ENCODE measurements at regions of chr17 and their contacts with region 1.

Region 1: DNA sequence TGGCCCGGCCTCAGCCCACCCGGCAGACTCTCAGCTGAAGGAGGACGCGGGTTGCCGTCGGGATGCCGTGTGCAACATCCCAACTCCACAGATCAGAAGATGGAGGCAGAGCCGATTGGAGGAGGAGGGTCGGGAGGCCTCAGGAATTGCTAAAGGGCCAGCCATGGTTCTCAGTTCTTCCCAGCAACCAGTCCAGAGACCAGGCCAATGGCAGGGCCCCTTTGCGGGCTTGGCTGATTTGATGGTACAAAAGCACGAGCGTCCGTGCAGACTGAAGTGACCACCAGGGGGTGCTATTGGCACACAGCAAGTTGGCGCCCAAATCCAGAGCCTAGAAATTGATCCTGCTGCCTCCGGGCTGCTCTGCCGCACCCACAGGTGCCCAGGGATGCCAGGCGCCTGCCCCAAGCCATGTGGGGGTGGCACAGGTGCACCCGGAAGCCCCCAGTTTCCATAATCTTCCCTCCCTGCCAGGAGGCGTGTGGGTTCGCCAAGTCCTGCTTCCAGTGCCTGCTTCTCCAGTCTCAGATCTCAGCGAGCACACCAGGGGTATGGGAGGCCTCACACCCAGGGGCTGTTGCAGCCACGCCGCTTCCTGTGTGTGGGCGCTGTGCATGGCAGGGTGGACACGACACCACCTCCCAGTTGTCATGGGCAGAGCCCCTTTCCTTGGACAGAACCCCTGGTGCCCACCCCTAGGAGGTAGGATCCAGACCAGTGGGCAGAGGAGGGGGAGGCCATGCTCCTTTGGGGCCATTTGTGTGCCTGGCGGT is 7.1 kb upstream of the TEX19 start:
- DNase-seq: peak; percentile 76 to 95 (median 83)
- ATAC-seq: peak; percentile 93
- H3K4me3 ChIP-seq: no peak overlapping the region
- H3K4me1 ChIP-seq: peaks cover 3% of the 10 kb centered on the region
- CTCF ChIP-seq: peak; percentile 91

Region 2: GRCh38 chr17:80446645-80447405 is 1905.1 kb before region 1 on chr17:
- intact Hi-C with region 1: no loop called
- DNase-seq: no peak
- ATAC-seq: no peak
- H3K4me3 ChIP-seq: no peak overlapping the region
- H3K4me1 ChIP-seq: no peaks in the 10 kb centered on the region
- CTCF ChIP-seq: no peak

Region 3: DNA sequence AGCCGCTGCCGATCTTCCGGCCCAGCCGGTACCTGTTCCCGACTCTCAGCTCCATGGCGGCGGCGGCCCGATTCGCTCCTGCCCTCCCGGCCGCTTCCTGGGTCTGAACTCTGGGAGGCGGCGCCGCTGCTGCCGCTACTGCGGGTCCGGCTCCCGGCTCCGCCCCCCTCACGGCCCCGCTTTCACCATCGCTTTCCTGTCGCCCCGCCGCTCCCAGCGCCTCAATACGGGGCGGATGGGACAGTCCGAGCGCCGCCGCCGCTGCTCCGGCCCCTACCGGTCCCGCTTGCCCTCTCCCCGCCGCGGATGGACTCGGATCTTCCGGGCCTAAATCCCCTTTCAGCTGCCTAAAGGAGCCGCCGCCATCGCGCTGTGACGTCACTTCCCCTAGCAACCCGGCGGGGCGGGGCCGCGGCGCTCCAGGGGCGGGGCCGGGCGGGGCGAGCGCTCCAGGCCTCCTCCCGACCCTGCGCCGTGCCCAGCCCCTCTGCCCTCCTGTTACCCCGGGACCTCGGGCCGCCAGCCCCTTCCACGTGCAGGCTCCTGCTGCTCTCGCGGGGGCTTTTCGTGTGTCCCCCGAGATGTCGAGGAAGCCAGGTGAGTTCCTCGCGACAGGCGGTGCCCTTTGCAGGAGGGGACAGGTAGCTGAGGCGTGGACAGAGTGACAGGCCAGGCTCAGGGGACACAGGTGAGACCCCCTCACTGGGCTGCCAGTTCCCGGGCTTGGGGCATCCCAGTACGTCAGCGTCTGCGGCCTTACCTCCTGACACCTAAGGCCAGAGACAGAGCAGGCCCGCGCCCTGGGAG is 78.4 kb before region 1 on chr17 and contains the start of gene CSNK1D:
- intact Hi-C with region 1: no loop called
- DNase-seq: peak; percentile 94 to 97 (median 96)
- ATAC-seq: peak; percentile 89
- H3K4me3 ChIP-seq: peak within 1 kb of the TSS; percentile 99
- H3K4me1 ChIP-seq: peaks cover 39% of the 10 kb centered on the region
- CTCF ChIP-seq: no peak
- total RNA-seq, gene CSNK1D: 177 to 221 (median 189) TPM

Region 4: DNA sequence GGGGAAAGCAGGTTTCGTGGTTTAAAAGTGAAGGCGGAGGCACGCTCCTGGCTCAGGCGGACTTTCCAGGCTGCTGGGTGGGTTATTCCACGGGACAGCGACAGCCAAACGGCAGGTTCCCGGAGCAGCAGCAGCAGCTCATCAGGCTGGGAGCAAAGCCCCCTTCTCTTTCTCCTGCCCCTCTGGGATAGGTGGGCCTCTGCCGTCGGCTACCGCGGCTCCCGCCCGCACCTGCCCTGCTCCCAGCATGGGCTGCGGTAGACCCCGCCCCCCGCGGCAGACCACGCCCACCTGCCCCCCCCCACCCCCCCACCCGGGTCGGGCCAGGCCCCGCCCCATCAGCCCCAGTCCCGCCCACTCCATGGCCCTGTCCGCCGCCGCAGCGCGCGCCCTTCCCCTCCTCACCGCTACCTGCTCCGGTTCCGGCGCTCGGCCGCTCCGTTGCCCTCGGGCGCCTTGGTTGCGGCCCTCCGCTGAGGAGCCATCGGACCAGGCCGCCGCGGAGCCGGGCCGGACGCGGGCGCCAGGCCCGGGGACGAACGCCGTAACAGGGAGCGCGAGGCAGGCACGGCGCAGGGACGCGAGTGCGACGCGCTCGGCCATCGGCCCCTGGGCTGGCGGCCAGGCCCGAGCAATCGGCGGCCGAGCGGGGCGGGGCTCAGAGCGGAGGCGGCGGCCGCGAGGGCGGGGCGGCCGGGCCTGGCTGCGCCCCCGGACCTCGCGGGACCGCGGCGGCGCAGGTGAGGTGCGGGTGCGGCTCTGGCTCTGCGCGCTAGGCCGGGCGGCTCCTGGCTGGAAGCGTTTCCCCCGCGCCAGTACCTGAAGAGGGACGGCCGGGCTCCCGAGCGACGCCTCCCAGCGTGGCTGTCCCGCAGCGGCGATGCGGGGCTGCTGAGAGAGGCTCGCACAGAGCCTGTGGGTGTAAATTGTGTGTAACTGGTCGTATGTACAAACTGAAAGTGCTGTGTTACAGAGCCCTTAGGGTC is 66.4 kb after region 1 on chr17 and contains the starts of genes HEXD and OGFOD3:
- intact Hi-C with region 1: loop called in 1 of 2 experiments (anchors 10 kb)
- DNase-seq: peak; percentile 88 to 93 (median 90)
- ATAC-seq: peak; percentile 97
- H3K4me3 ChIP-seq: peak within 1 kb of the TSS; percentile 40
- H3K4me1 ChIP-seq: peaks cover 18% of the 10 kb centered on the region
- CTCF ChIP-seq: no peak
- total RNA-seq, gene HEXD: 25.3 to 54.6 (median 42.1) TPM
- total RNA-seq, gene OGFOD3: 26.2 to 28.8 (median 26.2) TPM

Region 5: GRCh38 chr17:82424001-82424862 is 72.3 kb after region 1 on chr17:
- intact Hi-C with region 1: loop called (anchors 2 to 10 kb)
- DNase-seq: peak in 2 of 3 donors; percentile 53 to 70
- ATAC-seq: peak; percentile 67
- H3K4me3 ChIP-seq: no peak overlapping the region
- H3K4me1 ChIP-seq: peaks cover 8% of the 10 kb centered on the region
- CTCF ChIP-seq: peak; percentile 31